Activated naive CD4-positive, alpha-beta T cell treated with anti-CD3 and anti-CD28 coated beads for 36 hours (primary cell): ENCODE measurements at regions of chr4 and their contacts with region 1.

Region 1: DNA sequence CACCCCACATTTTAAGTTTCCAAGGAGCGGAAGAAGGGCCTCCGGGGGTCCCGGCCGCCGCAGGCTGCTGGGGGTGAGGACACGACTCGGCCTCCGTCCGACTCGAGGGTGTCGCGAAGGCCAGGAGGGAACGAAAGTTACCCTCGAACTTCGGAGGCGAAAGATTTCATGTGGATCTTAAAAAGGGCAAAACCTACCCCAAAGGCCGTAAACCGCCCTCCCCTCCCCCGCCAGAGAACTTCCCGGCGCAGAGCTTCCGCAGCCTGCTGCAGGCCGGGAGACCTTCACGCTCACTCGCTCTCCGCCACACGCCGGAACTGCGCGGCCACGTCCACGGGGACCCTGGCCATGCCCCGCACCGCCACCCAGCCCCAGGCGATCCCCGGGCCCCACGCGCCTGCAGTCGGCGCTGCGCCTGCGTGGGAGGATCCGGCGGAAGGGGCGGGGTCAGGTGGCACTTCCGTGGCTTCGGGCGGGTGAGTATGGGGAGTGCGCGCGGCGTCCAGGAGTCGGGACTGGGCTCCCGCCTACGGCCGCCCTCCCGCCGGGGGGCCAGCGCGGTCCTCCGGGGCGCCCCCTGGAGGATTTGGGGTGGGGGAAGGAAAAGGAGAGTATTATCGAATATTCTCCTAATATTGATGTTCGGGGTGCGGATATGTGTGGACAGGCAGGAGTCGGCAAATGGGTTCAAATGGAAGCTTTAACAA is at the start of gene MMAA:
- DNase-seq: peak; percentile 95
- H3K4me3 Mint-ChIP-seq: peak within 1 kb of the TSS; percentile 93
- H3K27ac Mint-ChIP-seq: peak within 1 kb of the TSS; percentile 99
- H3K4me1 Mint-ChIP-seq: peaks cover 47% of the 10 kb centered on the region
- H3K27me3 Mint-ChIP-seq: no peaks in the 10 kb centered on the region
- total RNA-seq, gene MMAA: 15.2 to 19.6 TPM

Region 2: GRCh38 chr4:145180298-145181090 is 438.6 kb before region 1 on chr4 and contains the start of gene OTUD4:
- CTCF ChIA-PET with region 1: interaction called, 3 read pairs
- intact Hi-C with region 1: loop called (anchors 1 kb)
- DNase-seq: peak; percentile 96
- H3K4me3 Mint-ChIP-seq: peak within 1 kb of the TSS; percentile 93
- H3K27ac Mint-ChIP-seq: peak within 1 kb of the TSS; percentile 98
- H3K4me1 Mint-ChIP-seq: peaks cover 29% of the 10 kb centered on the region
- H3K27me3 Mint-ChIP-seq: no peaks in the 10 kb centered on the region
- total RNA-seq, gene OTUD4: 35.9 to 37.1 TPM

Region 3: GRCh38 chr4:145308598-145308997 is 310.5 kb before region 1 on chr4:
- CTCF ChIA-PET with region 1: no interaction called
- intact Hi-C with region 1: loop called (anchors 1 kb)
- DNase-seq: peak; percentile 26
- H3K4me3 Mint-ChIP-seq: no peak overlapping the region
- H3K27ac Mint-ChIP-seq: peak overlapping the region; percentile 72
- H3K4me1 Mint-ChIP-seq: peaks cover 34% of the 10 kb centered on the region
- H3K27me3 Mint-ChIP-seq: peaks cover 4% of the 10 kb centered on the region

Region 4: GRCh38 chr4:145436796-145437195 is 182.3 kb before region 1 on chr4:
- CTCF ChIA-PET with region 1: no interaction called
- intact Hi-C with region 1: no loop called
- DNase-seq: no peak
- H3K4me3 Mint-ChIP-seq: no peak overlapping the region
- H3K27ac Mint-ChIP-seq: no peak overlapping the region
- H3K4me1 Mint-ChIP-seq: no peaks in the 10 kb centered on the region
- H3K27me3 Mint-ChIP-seq: peaks cover 14% of the 10 kb centered on the region

Region 5: DNA sequence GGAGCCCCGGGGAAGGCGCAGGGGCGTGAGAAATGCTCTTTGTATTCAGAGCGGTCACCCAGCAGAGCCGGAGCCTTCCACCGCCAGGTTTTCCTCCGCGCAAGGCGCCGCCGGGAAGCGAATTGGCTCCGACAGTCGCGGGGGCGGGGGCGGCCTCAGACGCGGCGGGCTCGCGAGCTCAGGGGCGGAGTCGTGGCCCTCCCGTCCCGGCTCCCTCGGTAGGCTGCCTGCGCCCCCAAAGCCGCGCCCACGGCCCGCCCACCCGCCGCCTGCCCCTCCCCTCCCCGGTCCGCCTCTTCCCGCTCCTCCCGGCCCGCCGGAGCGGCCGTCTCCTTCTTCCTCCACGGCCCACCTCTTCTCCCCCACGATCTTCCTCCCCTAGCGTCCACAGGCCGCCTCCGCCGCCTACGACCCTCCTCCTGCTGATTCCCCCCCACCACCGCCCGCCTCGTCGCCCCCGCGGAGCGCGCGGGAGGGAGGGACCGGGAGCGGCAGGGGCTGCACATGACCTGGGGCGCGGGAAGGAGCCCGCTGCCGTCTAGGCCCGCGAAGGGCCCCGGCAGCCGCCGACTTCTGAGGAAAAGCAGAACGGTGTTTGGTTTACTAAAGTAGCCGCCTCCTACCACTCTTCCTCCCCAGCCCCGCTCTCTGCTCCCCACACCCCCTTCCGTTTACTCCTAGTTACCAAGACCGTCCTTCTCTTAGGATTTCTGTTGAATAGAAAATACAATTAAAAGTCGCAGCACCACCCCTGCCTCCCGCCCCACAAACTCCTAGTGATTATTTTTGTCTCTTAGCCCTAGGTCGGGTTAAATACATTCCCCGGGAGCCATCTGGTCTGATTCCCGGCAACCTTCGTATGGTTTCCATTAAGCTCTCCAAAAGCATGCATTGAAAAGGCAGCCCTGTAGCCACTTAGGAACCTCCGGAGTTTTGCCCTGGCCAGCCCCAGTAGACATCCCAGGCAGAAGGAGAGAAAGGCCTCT is 114.1 kb after region 1 on chr4:
- CTCF ChIA-PET with region 1: no interaction called
- intact Hi-C with region 1: loop called (anchors 1 kb)
- DNase-seq: peak; percentile 91
- H3K4me3 Mint-ChIP-seq: peak overlapping the region; percentile 75
- H3K27ac Mint-ChIP-seq: peak overlapping the region; percentile 36
- H3K4me1 Mint-ChIP-seq: peaks cover 7% of the 10 kb centered on the region
- H3K27me3 Mint-ChIP-seq: peaks cover 10% of the 10 kb centered on the region

Region 6: DNA sequence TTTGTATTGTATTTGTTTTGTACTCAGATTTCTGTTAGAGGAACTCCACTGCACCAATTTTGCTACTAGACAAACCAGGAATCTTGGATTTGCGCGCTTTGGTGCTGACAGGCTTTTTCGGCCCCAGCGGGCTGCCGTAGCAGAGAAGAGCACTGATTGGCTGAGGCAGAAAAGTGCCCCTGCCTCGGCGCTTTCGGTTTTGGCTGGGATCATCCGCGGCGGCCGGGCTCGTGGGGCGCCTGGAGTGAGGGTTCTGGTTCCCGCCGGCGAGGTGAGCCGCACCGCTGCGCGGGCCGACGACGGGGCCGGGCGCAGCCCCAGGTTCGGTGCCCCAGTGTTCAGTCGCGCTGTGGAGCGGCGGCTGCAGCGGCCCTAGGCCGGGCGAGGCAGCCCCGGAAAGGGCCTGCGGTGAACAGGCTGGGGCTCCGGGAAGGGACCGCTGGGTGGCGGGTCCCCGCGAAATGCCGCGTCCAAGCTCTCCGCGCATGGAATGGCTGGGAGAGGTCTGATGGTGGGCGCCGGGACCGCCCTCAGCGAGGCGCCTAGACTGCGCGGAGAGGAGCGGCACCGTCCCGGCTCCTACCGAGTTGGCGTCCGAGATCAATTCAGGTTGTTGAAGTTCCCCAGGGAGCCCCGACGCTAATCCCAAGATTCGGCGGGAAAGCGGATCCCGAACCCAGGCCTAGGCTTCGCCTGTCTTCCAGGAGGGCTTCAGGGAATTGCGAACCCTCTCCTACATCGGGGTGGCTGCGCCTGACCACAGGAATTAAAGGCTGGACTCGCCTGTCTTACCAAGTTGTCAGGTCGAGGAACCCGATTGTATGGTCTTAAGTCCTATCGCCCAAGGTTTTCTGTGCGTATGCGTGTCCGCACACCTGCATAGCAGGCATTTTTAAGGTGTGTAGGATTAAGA is 556.7 kb after region 1 on chr4 and contains the start of gene LSM6:
- CTCF ChIA-PET with region 1: no interaction called
- intact Hi-C with region 1: loop called (anchors 2 kb)
- DNase-seq: peak; percentile 89
- H3K4me3 Mint-ChIP-seq: peak within 1 kb of the TSS; percentile 80
- H3K27ac Mint-ChIP-seq: peak within 1 kb of the TSS; percentile 90
- H3K4me1 Mint-ChIP-seq: peaks cover 48% of the 10 kb centered on the region
- H3K27me3 Mint-ChIP-seq: no peaks in the 10 kb centered on the region
- total RNA-seq, gene LSM6: 62.9 to 65.8 TPM

Region 7: DNA sequence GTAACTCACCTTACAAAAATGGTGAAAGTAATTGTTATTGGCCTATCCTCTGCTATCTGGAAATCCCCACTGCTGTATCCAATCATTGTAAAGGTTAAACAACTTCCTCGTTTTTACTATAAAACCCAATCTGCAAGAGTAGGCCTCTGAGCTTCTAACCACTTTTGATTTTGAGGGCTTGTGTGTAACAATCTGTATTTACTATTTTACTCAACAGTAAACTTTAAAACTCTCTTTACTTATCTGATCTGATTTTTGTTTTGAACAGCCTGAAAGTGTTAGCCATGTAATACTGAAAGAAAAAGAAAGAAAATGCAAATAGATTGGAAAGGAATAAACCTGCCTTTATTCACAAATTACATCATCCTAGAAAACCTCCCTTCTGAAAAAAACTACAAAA is 839.5 kb after region 1 on chr4:
- CTCF ChIA-PET with region 1: no interaction called
- intact Hi-C with region 1: loop called (anchors 10 kb)
- DNase-seq: peak; percentile 15
- H3K4me3 Mint-ChIP-seq: peak overlapping the region; percentile 63
- H3K27ac Mint-ChIP-seq: peak overlapping the region; percentile 91
- H3K4me1 Mint-ChIP-seq: peaks cover 32% of the 10 kb centered on the region
- H3K27me3 Mint-ChIP-seq: no peaks in the 10 kb centered on the region